Spleen (tissue), 13 donors: ENCODE measurements at regions of chr11 and their contacts with region 1.

Region 1: DNA sequence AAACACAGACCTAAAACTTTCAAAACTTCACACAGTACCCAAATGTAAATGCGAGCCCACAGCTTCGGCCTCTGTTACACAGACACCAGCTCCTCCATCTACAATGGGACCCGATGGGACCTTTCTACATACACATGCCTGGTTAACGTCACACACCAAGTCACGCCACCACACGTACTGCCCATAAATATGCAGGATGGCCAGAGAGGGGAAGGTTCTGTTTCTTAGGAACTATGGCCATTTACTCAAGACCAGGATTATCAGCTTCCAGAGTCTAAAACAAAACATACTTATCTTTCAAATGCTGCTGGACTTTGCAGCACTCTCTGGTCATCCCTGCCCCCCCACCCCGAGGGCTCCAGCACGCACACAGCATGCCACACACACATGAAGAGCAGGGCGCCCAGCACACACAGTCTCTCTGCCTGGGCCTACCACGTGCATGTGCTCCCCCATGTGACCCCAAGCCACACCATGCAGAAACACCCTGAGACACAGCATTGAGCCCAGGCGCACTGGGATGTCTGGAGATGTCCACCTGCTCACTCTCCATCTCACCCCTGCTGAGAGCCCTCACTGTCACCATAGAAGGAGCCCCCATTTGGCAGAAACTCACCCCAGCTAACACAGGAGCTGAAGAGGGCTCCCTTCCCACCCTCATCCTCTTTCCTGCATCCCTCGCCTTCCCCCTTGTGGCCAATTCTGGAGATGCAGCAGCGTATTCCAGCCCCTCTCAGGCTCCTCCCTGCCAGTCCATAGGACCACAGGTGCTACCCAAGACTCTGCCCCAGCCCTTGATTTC is 61.8 kb downstream of the SLC22A12 start:
- DNase-seq: peak; percentile 88
- H3K4me3 ChIP-seq: no peak overlapping the region
- H3K27ac ChIP-seq: no peak overlapping the region
- H3K4me1 ChIP-seq: peaks cover 0 to 51% (median 35%) of the 10 kb centered on the region in 6 donors
- H3K27me3 ChIP-seq: peaks cover 0 to 24% (median 0%) of the 10 kb centered on the region in 7 donors
- CTCF ChIP-seq: peak; percentile 76 to 94 (median 89)
- POLR2A ChIP-seq: no peak

Region 2: GRCh38 chr11:64448599-64449556 is 203.9 kb before region 1 on chr11:
- intact Hi-C with region 1: no loop called
- DNase-seq: peak; percentile 95
- H3K4me3 ChIP-seq: peak overlapping the region; percentile 22 to 70 (median 39)
- H3K27ac ChIP-seq: peak overlapping the region; percentile 32 to 86 (median 71)
- H3K4me1 ChIP-seq: peaks cover 16 to 33% (median 27%) of the 10 kb centered on the region in 6 donors
- H3K27me3 ChIP-seq: peaks cover 0 to 15% (median 0%) of the 10 kb centered on the region in 7 donors
- CTCF ChIP-seq: peak; percentile 56 to 91 (median 84)
- POLR2A ChIP-seq: no peak

Region 3: GRCh38 chr11:64553551-64554201 is 99.1 kb before region 1 on chr11:
- intact Hi-C with region 1: loop called (anchors 2 kb)
- DNase-seq: peak; percentile 84
- H3K4me3 ChIP-seq: no peak overlapping the region
- H3K27ac ChIP-seq: peak overlapping the region in 7 of 8 donors; percentile 15 to 66 (median 62)
- H3K4me1 ChIP-seq: peaks cover 15 to 33% (median 27%) of the 10 kb centered on the region in 6 donors
- H3K27me3 ChIP-seq: no peaks in the 10 kb centered on the region
- CTCF ChIP-seq: peak; percentile 85 to 97 (median 93)
- POLR2A ChIP-seq: no peak